GM12878 (cell line): ENCODE measurements at regions of chr16 and their contacts with region 1.

Region 1: DNA sequence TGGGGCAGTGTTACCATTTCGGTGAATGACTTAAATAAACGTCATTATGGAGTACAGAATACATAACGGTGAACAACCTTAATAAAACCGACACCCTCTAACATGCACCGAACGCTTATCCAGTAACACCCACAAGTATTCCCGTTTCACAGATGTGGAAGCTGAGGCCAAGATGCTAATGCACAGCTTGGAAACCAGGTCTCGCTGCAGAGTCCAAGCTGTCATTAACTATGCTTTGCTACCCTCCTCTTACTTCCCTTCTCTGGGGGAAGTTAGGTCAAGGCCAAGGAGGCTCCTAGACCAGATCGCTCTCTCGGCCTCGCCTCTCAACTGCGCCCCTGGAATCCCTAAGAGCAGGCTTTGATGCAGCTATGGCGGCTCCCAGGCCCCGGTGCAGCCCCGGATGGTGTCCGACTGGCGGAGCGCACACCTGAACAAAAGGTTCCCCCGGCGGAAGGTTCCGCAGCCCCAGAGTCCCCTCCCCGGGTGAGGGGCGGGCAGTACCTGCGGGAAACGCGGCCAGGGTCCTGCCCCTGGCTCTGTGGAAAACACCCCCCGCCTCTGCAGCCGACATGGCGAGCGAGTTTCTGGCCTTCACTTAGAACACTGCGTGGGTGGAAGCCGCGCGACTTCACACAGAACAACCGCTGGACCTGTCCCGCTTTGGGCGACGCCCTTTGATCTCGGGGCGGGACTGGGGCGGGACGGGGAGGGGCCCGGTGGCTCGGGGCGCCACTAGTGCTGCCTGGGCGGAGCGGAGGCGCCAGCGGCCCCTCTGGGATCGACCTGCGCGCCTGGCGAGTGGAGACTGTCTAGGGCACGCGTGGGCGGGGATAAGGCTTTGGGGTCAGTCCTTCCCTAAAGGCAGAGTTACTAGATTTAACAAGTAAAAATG is at the start of gene CPPED1:
- DNase-seq: peak; percentile 72
- ATAC-seq: peak; percentile 89
- H3K4me3 ChIP-seq: peak within 1 kb of the TSS; percentile 88
- H3K27ac ChIP-seq: peak within 1 kb of the TSS; percentile 81
- H3K4me1 ChIP-seq: peaks cover 22% of the 10 kb centered on the region
- H3K27me3 ChIP-seq: no peaks in the 10 kb centered on the region
- CTCF ChIP-seq: no peak; a peak in 1 of 6 replicates
- EP300 ChIP-seq: peak in 1 of 2 experiments; percentile 24; a peak in 1 of 4 replicates
- POLR2A ChIP-seq: peak; percentile 97
- RAD21 ChIP-seq: no peak
- polyA plus RNA-seq, gene CPPED1: 11.4 to 12.3 TPM

Region 2: DNA sequence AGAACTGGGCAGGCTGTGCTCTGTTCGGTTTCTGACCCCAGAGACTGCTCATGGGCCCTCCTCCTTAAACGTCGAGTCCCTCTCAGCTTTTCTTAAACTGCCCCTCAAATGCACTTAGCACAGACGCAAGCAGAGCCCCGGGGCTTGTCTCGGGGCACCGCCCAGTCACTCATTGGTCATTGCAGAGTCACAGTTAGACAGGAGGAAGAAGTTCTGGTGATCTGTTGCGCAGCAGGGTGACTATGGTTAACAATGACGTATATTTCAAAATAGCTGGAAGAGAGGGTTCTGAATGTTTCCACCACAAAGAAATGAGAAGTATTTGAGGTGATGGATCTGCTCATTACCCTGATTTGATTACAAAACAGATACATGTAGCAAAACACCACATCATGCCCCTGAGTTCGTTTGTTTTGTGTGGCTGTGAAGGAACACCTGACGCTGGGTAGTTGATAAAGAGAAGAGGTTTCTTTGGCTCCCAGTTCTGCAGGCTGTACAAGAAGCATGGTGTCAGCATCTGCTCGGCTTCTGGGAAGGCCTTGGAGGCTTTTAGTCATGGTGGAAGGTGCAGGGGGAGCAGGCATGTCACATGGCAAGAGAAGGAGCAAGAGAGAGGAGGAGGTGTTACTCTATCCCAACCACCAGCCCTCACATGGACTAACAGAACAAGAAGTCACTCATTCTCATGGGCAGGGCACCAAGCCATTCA is 387.2 kb before region 1 on chr16:
- CTCF ChIA-PET with region 1: no interaction called
- POLR2A ChIA-PET with region 1: no interaction called
- RAD21 ChIA-PET with region 1: no interaction called
- SMC1A ChIA-PET with region 1: no interaction called
- in situ Hi-C with region 1: no loop called
- intact Hi-C with region 1: no loop called
- DNase-seq: no peak
- ATAC-seq: no peak
- H3K4me3 ChIP-seq: no peak overlapping the region
- H3K27ac ChIP-seq: no peak overlapping the region
- H3K4me1 ChIP-seq: no peaks in the 10 kb centered on the region; the same call in 1 of the 2 replicates
- H3K27me3 ChIP-seq: no peaks in the 10 kb centered on the region
- CTCF ChIP-seq: no peak
- EP300 ChIP-seq: no peak
- POLR2A ChIP-seq: no peak
- RAD21 ChIP-seq: no peak

Region 3: DNA sequence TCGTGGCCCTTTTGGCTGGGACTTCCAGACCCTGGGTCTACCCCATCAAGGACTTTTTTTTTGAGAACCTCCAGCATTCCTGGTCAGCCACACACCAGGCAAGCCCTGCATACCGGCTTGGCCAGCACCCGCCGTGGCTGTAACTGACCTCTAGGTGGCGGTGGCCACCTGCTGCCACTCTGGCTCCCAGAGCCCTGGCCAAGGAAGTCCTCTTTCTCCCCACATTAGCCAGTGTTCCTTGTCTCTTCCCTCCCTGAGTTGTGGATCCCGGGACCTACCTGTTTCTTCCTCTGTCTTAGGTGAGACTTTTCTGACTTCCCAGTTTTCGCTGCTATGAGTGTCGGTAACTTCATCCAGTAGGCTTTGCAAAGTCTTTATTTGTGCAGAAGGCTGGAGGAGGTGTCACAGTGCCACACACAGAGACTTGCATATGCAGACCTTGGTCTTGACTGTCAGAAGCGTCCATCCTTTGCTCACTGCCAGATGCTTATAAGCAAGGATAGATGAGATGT is 348.1 kb before region 1 on chr16:
- CTCF ChIA-PET with region 1: no interaction called
- POLR2A ChIA-PET with region 1: no interaction called
- RAD21 ChIA-PET with region 1: no interaction called
- SMC1A ChIA-PET with region 1: no interaction called
- in situ Hi-C with region 1: loop called (anchors 10 kb)
- intact Hi-C with region 1: no loop called
- DNase-seq: no peak
- ATAC-seq: peak; percentile 90
- H3K4me3 ChIP-seq: no peak overlapping the region
- H3K27ac ChIP-seq: no peak overlapping the region
- H3K4me1 ChIP-seq: peaks cover 14% of the 10 kb centered on the region
- H3K27me3 ChIP-seq: no peaks in the 10 kb centered on the region
- CTCF ChIP-seq: peak; percentile 72 to 88 (median 83)
- EP300 ChIP-seq: no peak
- POLR2A ChIP-seq: no peak
- RAD21 ChIP-seq: peak; percentile 75

Region 4: DNA sequence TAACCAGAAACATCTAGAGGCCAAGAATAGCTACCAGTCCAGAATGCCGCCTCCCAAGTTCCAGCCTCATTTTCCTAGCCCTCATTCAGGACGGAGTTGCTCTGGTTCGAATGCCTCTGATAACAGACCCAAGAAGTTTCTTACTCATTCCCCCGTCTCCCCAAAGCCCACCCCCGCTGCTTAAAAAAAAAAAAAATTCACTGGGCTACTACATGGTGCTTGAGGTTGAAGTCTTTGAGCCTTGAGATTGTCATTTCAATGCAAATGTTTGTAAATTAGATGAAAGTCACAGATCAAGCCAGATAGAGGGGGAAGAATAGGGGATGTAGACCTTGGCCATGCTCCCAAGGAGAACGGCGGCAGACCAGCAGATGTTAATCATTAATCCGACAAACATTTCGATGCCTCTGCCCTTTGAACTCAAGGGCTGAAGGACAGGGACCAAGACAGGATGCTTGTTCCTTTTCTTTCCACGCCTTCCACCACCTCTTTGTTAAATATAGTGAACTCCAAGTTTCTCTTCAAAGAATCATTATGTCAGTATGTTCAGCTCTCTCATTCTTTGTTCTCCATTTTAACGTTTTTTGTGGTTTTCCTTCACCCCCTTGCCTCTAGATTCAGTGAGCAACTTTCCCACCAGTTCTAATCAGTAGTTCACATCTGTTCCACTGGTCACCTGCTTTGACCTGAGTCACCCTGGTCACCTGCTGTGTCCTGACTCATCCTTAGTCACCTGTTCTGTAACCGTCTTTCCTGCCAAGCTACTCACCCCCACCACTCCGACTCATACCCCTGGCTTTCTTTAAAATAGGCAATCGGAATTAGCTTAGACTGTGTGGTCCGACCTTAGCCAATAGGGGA is 190.1 kb before region 1 on chr16:
- CTCF ChIA-PET with region 1: interaction called, 6 read pairs
- POLR2A ChIA-PET with region 1: interaction called, 3 read pairs
- RAD21 ChIA-PET with region 1: interaction called, 3 read pairs
- SMC1A ChIA-PET with region 1: interaction called, 3 read pairs
- in situ Hi-C with region 1: no loop called
- intact Hi-C with region 1: loop called (anchors 2 kb)
- DNase-seq: peak; percentile 76
- ATAC-seq: peak; percentile 88
- H3K4me3 ChIP-seq: no peak overlapping the region
- H3K27ac ChIP-seq: no peak overlapping the region
- H3K4me1 ChIP-seq: peaks cover 17% of the 10 kb centered on the region
- H3K27me3 ChIP-seq: no peaks in the 10 kb centered on the region
- CTCF ChIP-seq: no peak
- EP300 ChIP-seq: peak; percentile 64 to 90; a peak in 3 of 4 replicates
- POLR2A ChIP-seq: no peak
- RAD21 ChIP-seq: no peak

Region 5: GRCh38 chr16:12729448-12729847 is 74.0 kb before region 1 on chr16:
- CTCF ChIA-PET with region 1: no interaction called
- POLR2A ChIA-PET with region 1: no interaction called
- RAD21 ChIA-PET with region 1: no interaction called
- SMC1A ChIA-PET with region 1: no interaction called
- in situ Hi-C with region 1: no loop called
- intact Hi-C with region 1: no loop called
- DNase-seq: no peak
- ATAC-seq: no peak
- H3K4me3 ChIP-seq: no peak overlapping the region
- H3K27ac ChIP-seq: no peak overlapping the region
- H3K4me1 ChIP-seq: no peaks in the 10 kb centered on the region
- H3K27me3 ChIP-seq: no peaks in the 10 kb centered on the region
- CTCF ChIP-seq: no peak
- EP300 ChIP-seq: no peak
- POLR2A ChIP-seq: no peak
- RAD21 ChIP-seq: no peak